Posterior vena cava (tissue), 2 donors: ENCODE measurements at regions of chr7 and their contacts with region 1.

Region 1: DNA sequence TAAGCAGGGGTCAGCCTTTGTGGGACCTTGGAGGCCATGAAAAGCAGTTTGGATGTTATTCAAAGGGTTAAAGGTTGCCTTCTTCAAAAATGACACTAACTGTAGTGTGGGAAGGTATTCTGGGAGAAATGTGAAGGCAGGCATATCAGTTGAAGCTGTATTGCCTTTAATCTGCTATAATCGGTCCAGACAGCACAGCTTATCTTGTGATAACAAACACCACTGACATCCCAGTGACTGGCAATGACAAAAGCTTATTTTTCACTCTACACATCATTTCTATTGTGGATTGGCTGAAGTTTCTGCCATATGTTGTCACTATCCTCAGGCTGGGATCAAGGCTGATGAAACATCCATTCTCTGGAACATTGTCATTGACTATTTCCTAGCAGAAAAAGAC is 1149.2 kb downstream of the GRM8 start:
- DNase-seq: no peak

Region 2: DNA sequence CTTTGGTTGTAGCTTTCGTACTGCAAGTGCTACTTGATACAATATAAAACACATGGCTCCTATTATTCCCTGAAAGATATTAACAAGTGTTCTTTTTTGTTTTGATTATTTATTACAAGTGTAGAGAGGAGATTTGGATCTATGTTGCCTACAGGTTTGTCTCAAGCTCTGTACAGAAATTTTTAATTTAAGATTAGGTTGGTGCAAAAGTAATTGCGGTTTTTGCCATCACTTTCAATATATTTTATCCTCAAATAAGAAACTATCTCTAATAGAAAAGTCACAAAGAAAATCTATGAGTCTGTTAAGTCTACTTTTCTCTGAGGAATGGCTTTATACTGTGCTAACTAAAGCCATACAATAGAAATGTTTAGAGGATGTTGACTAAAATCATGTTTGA is 63.1 kb after region 1 on chr7:
- intact Hi-C with region 1: loop called in 1 of 2 experiments (anchors 2 kb)
- DNase-seq: no peak